A673 (cell line): ENCODE measurements at regions of chr9 and their contacts with region 1.

Region 1: DNA sequence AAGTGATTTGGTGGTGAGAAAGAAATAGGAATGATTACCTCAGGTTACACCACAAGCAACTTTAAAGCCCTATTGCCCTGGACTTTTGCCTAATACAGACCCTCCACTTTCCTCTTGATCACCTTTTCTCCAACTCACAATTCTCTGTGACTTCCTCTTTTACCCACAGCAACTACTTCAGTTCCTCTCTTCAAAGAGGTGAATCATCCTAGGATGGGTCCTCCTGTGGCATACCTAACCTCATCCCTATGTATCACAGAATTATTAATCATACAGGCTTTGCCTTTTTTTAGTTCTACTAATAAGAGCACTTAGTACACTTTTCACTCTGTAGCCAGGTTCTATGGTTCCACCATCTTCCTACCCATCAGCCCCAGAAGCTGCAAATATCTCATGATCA is 19.6 kb upstream of the INSL6 start:
- DNase-seq: no peak
- H3K4me3 ChIP-seq: no peak overlapping the region
- H3K27ac ChIP-seq: no peak overlapping the region
- H3K4me1 ChIP-seq: no peaks in the 10 kb centered on the region
- H3K27me3 ChIP-seq: no peaks in the 10 kb centered on the region
- CTCF ChIP-seq: no peak

Region 2: GRCh38 chr9:4828761-4829160 is 376.3 kb before region 1 on chr9:
- CTCF ChIA-PET with region 1: no interaction called
- POLR2A ChIA-PET with region 1: no interaction called
- intact Hi-C with region 1: no loop called
- DNase-seq: peak; percentile 33
- H3K4me3 ChIP-seq: no peak overlapping the region
- H3K27ac ChIP-seq: no peak overlapping the region
- H3K4me1 ChIP-seq: peaks cover 12% of the 10 kb centered on the region
- H3K27me3 ChIP-seq: no peaks in the 10 kb centered on the region
- CTCF ChIP-seq: no peak

Region 3: GRCh38 chr9:5178126-5178805 is 26.8 kb before region 1 on chr9:
- CTCF ChIA-PET with region 1: no interaction called
- POLR2A ChIA-PET with region 1: no interaction called
- intact Hi-C with region 1: loop called (anchors 5 kb)
- DNase-seq: no peak
- H3K4me3 ChIP-seq: no peak overlapping the region
- H3K27ac ChIP-seq: no peak overlapping the region
- H3K4me1 ChIP-seq: no peaks in the 10 kb centered on the region
- H3K27me3 ChIP-seq: no peaks in the 10 kb centered on the region
- CTCF ChIP-seq: no peak